Ascending aorta (tissue), 2 donors: ENCODE measurements at regions of chr12 and their contacts with region 1.

Region 1: DNA sequence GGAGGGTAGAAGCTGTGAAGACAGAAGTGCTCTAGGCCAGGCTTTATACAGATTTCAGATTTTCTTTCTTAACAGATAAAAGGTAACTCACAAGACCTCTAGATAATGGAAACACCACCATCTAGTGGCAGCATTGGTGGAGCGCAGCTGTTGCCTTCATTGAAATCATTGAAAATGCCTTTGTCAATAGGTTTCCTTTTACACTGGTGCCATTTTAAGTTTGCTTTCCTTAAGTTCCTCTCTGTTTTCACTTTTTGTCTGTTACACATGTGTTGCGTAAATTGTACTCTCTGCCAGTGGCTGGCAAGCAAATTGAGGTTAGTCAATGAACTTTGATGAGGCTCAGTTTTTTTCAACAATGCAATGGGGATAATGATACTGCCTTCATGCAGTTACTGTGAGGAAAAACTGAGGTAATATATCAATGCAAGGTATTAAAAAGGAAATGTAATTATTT is 31.1 kb downstream of the ALDH1L2 start:
- DNase-seq: peak; percentile 17 to 92
- H3K4me3 ChIP-seq: no peak overlapping the region
- H3K27ac ChIP-seq: no peak overlapping the region
- H3K4me1 ChIP-seq: no peaks in the 10 kb centered on the region
- H3K27me3 ChIP-seq: no peaks in the 10 kb centered on the region
- CTCF ChIP-seq: peak; percentile 84 to 92 (median 91)

Region 2: DNA sequence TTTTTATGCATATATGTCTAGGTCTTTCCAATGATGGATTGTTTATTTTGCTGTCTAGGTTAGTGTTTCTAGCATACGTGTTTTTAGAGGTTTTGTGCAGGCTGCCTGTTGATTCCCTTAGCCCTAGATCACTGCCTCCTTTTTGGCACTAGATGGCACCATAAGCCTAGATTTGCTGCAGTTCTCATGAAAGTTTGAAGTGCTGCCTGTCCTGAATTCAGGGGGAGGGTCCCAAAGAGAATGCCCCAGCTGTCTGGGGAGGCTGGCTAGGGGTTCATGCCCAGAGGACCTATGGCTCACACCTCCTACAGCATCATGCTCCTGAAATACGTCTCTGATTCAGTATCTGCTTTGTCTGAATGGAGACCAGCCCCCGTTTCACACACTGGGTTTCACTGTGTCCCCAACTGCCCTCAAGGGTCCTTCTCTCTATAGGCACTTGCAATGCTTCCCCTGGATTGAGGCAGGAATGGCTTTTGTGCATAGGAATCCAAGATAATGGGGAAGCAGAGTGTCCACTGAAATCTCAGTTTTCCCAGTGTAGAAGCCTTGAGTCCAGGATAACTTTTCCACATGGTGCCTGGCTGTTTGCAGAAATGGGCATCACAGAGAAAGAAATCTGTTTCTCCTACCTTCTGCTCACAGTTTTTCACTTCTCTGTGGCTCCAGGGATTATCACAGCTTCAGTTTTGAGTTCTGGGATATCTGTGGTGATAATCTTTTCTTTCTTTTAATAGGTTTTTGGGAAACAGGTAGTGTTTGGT is 851.7 kb before region 1 on chr12:
- intact Hi-C with region 1: loop called (anchors 5 kb)
- DNase-seq: peak in 1 of 2 donors; percentile 69
- H3K4me3 ChIP-seq: no peak overlapping the region
- H3K27ac ChIP-seq: no peak overlapping the region
- H3K4me1 ChIP-seq: peaks cover 0 to 14% of the 10 kb centered on the region in 2 donors
- H3K27me3 ChIP-seq: no peaks in the 10 kb centered on the region
- CTCF ChIP-seq: peak; percentile 80 to 84 (median 83)

Region 3: DNA sequence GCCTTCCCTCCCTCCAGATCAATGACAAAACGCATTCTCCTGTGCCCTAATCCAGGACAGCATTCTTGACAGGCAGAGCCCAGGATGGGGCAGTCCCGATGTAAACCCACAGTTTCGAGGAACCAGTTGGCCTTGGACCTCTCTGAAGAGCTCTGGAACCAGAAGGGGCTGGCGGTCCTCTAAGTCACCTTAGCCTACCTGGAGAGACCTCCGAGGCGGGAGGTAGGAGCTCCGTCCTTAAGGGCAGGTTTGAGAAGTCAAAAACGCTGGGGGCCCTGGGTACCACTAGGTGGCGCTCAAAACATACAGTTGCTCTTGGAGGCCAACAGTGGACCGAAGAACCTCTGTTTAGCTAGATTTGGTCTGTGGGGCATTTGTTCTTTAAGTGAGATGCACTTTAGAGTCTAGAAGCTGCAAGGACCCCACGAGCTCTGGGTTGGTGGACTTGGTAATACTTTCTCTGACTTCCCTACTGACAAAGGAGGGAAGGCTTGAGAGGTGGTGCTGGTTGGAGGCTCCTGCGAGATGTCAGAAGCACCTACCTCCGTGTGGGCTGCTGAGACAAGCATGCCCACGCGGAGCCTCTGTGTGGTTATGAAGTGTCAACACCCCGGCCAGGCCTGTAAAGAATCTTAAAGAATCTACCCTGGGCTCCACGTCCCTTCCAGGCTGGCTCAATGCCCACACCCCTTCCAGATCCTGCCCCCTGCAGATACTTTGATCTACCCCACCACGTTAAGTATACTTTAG is 671.2 kb before region 1 on chr12:
- intact Hi-C with region 1: loop called (anchors 1 kb)
- DNase-seq: peak; percentile 16 to 85
- H3K4me3 ChIP-seq: peak overlapping the region in 1 of 2 donors; percentile 15
- H3K27ac ChIP-seq: no peak overlapping the region
- H3K4me1 ChIP-seq: peaks cover 0 to 8% of the 10 kb centered on the region in 2 donors
- H3K27me3 ChIP-seq: no peaks in the 10 kb centered on the region
- CTCF ChIP-seq: peak; percentile 88 to 93 (median 93)

Region 4: DNA sequence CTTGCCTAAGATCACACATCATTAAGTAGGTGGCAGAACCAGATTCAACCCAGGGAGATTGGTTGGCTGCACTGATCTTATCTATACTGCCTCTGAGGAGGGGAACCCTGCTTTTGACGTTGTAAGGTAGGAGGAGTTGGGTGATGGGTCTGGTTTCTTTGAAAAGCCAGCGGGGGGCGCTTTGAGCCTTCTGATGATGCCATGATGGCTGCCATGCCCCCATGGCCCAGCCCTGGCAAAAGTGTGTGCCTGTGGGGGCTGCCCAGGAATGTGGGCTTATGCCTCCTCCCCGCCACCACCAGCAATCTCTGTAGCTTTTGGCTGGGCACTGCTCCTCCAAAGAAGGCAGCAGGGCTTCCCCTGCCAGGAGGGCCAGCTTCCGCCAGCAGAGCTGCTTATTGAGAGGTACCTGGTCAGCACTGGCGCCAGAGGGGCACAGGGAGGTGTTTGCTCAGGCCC is 319.4 kb before region 1 on chr12:
- intact Hi-C with region 1: loop called (anchors 10 kb)
- DNase-seq: peak in 1 of 2 donors; percentile 67
- H3K4me3 ChIP-seq: no peak overlapping the region
- H3K27ac ChIP-seq: peak overlapping the region; percentile 12 to 34
- H3K4me1 ChIP-seq: peaks cover 0 to 40% of the 10 kb centered on the region in 2 donors
- H3K27me3 ChIP-seq: no peaks in the 10 kb centered on the region
- CTCF ChIP-seq: peak in 1 of 3 experiments; percentile 53

Region 5: GRCh38 chr12:104877123-104877705 is 175.9 kb before region 1 on chr12:
- intact Hi-C with region 1: loop called (anchors 5 kb)
- DNase-seq: no peak
- H3K4me3 ChIP-seq: no peak overlapping the region
- H3K27ac ChIP-seq: no peak overlapping the region
- H3K4me1 ChIP-seq: peaks cover 0 to 2% of the 10 kb centered on the region in 2 donors
- H3K27me3 ChIP-seq: no peaks in the 10 kb centered on the region
- CTCF ChIP-seq: peak; percentile 46 to 83 (median 77)

Region 6: GRCh38 chr12:104986022-104986941 is 66.9 kb before region 1 on chr12 and contains the start of gene NOPCHAP1:
- intact Hi-C with region 1: loop called (anchors 5 kb)
- DNase-seq: peak; percentile 75 to 97
- H3K4me3 ChIP-seq: peak within 1 kb of the TSS; percentile 72 to 76
- H3K27ac ChIP-seq: peak within 1 kb of the TSS; percentile 52 to 58
- H3K4me1 ChIP-seq: peaks cover 5 to 17% of the 10 kb centered on the region in 2 donors
- H3K27me3 ChIP-seq: no peaks in the 10 kb centered on the region
- CTCF ChIP-seq: no peak
- total RNA-seq, gene NOPCHAP1: 31.9 TPM